Caco-2 (cell line): ENCODE measurements at regions of chr2 and their contacts with region 1.

Region 1: GRCh38 chr2:219388127-219388844 is 574 bp upstream of the DNPEP start:
- DNase-seq: peak; percentile 98
- H3K4me3 ChIP-seq: peak overlapping the region; percentile 42
- H3K4me3 Mint-ChIP-seq: peak overlapping the region; percentile 96
- H3K27ac Mint-ChIP-seq: peak overlapping the region; percentile 94
- H3K4me1 ChIP-seq: peaks cover 15% of the 10 kb centered on the region
- H3K4me1 Mint-ChIP-seq: no peaks in the 10 kb centered on the region
- H3K27me3 ChIP-seq: no peaks in the 10 kb centered on the region
- H3K27me3 Mint-ChIP-seq: no peaks in the 10 kb centered on the region
- CTCF ChIP-seq: peak; percentile 32 to 60

Region 2: GRCh38 chr2:219171231-219171651 is 217.0 kb before region 1 on chr2:
- CTCF ChIA-PET with region 1: no interaction called
- POLR2A ChIA-PET with region 1: no interaction called
- intact Hi-C with region 1: loop called (anchors 1 kb)
- DNase-seq: peak; percentile 74 to 79
- H3K4me3 ChIP-seq: no peak overlapping the region
- H3K4me3 Mint-ChIP-seq: no peak overlapping the region
- H3K27ac Mint-ChIP-seq: peak overlapping the region; percentile 64
- H3K4me1 ChIP-seq: peaks cover 21% of the 10 kb centered on the region
- H3K4me1 Mint-ChIP-seq: peaks cover 28% of the 10 kb centered on the region
- H3K27me3 ChIP-seq: no peaks in the 10 kb centered on the region
- H3K27me3 Mint-ChIP-seq: no peaks in the 10 kb centered on the region
- CTCF ChIP-seq: peak; percentile 64 to 79

Region 3: GRCh38 chr2:219218732-219219701 is 169.3 kb before region 1 on chr2 and contains the start of gene ABCB6:
- CTCF ChIA-PET with region 1: no interaction called
- POLR2A ChIA-PET with region 1: interaction called, 8 read pairs
- intact Hi-C with region 1: loop called (anchors 5 kb)
- DNase-seq: peak; percentile 97
- H3K4me3 ChIP-seq: peak within 1 kb of the TSS; percentile 89
- H3K4me3 Mint-ChIP-seq: peak within 1 kb of the TSS; percentile 96
- H3K27ac Mint-ChIP-seq: peak within 1 kb of the TSS; percentile 95
- H3K4me1 ChIP-seq: peaks cover 18% of the 10 kb centered on the region
- H3K4me1 Mint-ChIP-seq: no peaks in the 10 kb centered on the region
- H3K27me3 ChIP-seq: no peaks in the 10 kb centered on the region
- H3K27me3 Mint-ChIP-seq: no peaks in the 10 kb centered on the region
- CTCF ChIP-seq: no peak
- total RNA-seq, gene ABCB6: 66.0 and 68.6 TPM in 2 replicates

Region 4: GRCh38 chr2:219402665-219403515 is 14.6 kb after region 1 on chr2:
- CTCF ChIA-PET with region 1: interaction called, 29 read pairs
- POLR2A ChIA-PET with region 1: interaction called, 9 read pairs
- intact Hi-C with region 1: loop called (anchors 1 kb)
- DNase-seq: peak; percentile 78 to 80
- H3K4me3 ChIP-seq: no peak overlapping the region
- H3K4me3 Mint-ChIP-seq: no peak overlapping the region
- H3K27ac Mint-ChIP-seq: no peak overlapping the region
- H3K4me1 ChIP-seq: peaks cover 28% of the 10 kb centered on the region
- H3K4me1 Mint-ChIP-seq: peaks cover 28% of the 10 kb centered on the region
- H3K27me3 ChIP-seq: no peaks in the 10 kb centered on the region
- H3K27me3 Mint-ChIP-seq: no peaks in the 10 kb centered on the region
- CTCF ChIP-seq: peak; percentile 82 to 95

Region 5: DNA sequence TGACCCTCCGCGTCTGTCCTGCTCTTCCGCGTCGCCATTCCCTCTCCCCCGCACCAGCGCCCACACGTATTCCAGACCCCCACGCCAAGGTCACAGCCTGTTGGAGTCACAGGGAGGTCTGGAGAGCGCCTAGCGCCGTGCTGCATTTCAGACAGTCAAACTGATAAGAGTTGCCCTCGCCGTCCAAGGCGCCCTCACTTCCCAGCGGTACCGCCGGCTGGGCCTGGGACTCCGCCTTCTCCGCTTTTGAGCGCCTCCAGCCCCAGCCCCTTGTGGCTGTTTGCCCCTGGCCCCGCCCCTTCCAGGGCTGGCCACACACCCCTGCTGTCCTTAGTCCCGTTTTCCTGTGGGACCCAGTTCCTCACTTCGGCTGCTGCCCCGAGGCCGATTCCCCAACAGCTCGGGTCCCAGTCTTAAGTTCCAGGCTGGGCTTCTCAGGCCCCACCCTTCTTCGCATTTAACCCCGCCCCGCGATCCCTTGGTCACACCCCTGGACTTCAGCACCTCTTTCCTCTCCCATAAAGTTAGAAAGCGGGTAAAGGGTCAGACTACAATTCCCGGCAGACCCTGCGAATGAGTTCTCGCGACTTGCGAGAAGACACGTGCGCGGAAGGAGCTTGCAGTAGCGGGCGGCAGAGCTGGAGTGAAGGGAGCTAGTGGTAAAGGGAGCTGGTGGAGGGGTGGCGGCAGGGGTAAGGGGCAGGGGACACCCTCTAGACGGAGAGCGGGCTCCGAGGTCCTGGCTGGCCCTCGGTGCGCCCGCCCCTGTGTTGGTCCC is 110.2 kb after region 1 on chr2 and contains the start of gene GMPPA:
- CTCF ChIA-PET with region 1: interaction called, 14 read pairs
- POLR2A ChIA-PET with region 1: interaction called, 9 read pairs
- intact Hi-C with region 1: loop called (anchors 1 kb)
- DNase-seq: peak; percentile 98 to 99
- H3K4me3 ChIP-seq: peak within 1 kb of the TSS; percentile 86
- H3K4me3 Mint-ChIP-seq: peak within 1 kb of the TSS; percentile 98
- H3K27ac Mint-ChIP-seq: peak within 1 kb of the TSS; percentile 94
- H3K4me1 ChIP-seq: peaks cover 14% of the 10 kb centered on the region; the same call in 1 of the 2 replicates
- H3K4me1 Mint-ChIP-seq: peaks cover 16% of the 10 kb centered on the region
- H3K27me3 ChIP-seq: no peaks in the 10 kb centered on the region
- H3K27me3 Mint-ChIP-seq: peaks cover under 1% of the 10 kb centered on the region
- CTCF ChIP-seq: no peak
- total RNA-seq, gene GMPPA: 51.0 and 53.7 TPM in 2 replicates